MCF 10A (cell line): ENCODE measurements at regions of chr7 and their contacts with region 1.

Region 1: DNA sequence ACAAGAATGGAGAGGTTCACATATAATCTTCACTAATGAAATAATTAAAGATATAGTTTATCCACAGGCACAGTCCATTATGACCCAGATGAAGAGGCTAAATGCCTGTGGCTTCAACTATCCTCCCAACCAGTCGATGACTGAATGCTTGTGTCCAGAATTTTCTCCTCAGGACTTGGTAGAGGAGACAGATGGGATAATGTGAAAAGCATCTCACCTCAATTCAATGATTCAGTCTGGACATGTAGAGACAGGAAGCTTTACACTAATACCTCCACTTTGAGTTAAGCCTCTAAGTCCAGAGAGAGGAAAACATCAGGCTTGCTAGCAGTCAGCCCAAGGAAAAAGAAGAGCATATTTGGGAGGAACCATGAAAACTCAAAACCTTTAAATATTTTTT is 59.1 kb upstream of the COL1A2 start:
- DNase-seq: peak; percentile 28
- H3K4me3 Mint-ChIP-seq: no peak overlapping the region
- H3K27ac Mint-ChIP-seq: peak overlapping the region; percentile 80
- H3K4me1 Mint-ChIP-seq: peaks cover 29% of the 10 kb centered on the region
- H3K27me3 Mint-ChIP-seq: no peaks in the 10 kb centered on the region
- CTCF ChIP-seq: no peak

Region 2: GRCh38 chr7:93955304-93955703 is 380.3 kb before region 1 on chr7:
- CTCF ChIA-PET with region 1: no interaction called
- POLR2A ChIA-PET with region 1: no interaction called
- intact Hi-C with region 1: no loop called
- DNase-seq: no peak
- H3K4me3 Mint-ChIP-seq: no peak overlapping the region
- H3K27ac Mint-ChIP-seq: no peak overlapping the region
- H3K4me1 Mint-ChIP-seq: no peaks in the 10 kb centered on the region
- H3K27me3 Mint-ChIP-seq: no peaks in the 10 kb centered on the region
- CTCF ChIP-seq: no peak

Region 3: DNA sequence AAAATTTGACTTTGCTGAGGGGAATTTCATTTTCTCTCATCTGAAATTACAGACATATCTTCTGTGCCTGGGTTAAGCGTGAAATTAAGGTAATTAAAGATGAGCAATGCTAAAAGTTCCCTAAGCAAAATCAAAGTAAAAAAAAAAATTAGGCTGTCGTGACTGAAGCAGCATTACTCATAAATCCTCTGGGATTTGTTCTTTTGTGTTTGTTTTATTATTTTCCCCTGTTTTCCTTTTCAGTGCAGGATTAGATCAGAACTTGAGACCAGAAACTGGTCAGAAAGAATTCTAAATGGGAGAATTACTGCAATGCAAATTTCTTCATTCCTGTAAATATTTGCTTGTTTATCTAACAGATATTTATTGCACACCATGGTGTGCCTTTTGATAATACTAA is 190.0 kb before region 1 on chr7:
- CTCF ChIA-PET with region 1: no interaction called
- POLR2A ChIA-PET with region 1: no interaction called
- intact Hi-C with region 1: no loop called
- DNase-seq: peak; percentile 13
- H3K4me3 Mint-ChIP-seq: no peak overlapping the region
- H3K27ac Mint-ChIP-seq: no peak overlapping the region
- H3K4me1 Mint-ChIP-seq: peaks cover 9% of the 10 kb centered on the region
- H3K27me3 Mint-ChIP-seq: no peaks in the 10 kb centered on the region
- CTCF ChIP-seq: no peak

Region 4: DNA sequence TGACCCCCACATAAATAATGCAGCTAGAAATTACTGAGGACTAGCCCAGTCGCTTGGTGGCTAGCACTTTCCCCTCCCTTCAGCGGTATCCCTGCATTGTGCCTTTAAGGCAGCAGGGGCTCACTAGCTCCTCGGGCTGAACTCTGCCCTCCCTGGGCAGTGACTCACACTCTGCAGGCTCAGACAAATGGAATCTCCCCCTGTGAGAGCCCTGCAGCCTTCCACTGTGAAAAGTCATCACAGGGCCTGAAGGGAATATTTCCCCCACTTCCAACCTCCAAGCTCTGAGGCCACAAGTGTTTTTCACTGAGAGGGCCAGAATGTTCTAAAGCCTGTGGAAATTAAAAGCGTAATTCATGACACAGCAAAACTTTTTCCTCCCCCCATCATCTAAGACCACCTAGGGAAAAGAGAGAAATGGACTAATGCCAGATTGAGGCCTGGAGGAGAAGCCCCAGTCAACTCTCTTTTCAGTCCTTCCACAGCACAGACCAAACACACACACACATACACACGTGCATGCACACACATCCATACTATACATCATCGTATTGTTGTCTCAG is 34.5 kb before region 1 on chr7:
- CTCF ChIA-PET with region 1: interaction called, 3 read pairs
- POLR2A ChIA-PET with region 1: no interaction called
- intact Hi-C with region 1: loop called (anchors 2 kb)
- DNase-seq: peak; percentile 92
- H3K4me3 Mint-ChIP-seq: peak overlapping the region; percentile 27
- H3K27ac Mint-ChIP-seq: peak overlapping the region; percentile 86
- H3K4me1 Mint-ChIP-seq: peaks cover 39% of the 10 kb centered on the region
- H3K27me3 Mint-ChIP-seq: no peaks in the 10 kb centered on the region
- CTCF ChIP-seq: no peak